A673 (cell line): ENCODE measurements at regions of chr18 and their contacts with region 1.

Region 1: GRCh38 chr18:59865241-59865986 is 34.4 kb upstream of the PMAIP1 start:
- DNase-seq: no peak
- H3K4me3 ChIP-seq: no peak overlapping the region
- H3K27ac ChIP-seq: no peak overlapping the region
- H3K4me1 ChIP-seq: no peaks in the 10 kb centered on the region
- H3K27me3 ChIP-seq: no peaks in the 10 kb centered on the region
- CTCF ChIP-seq: no peak

Region 2: GRCh38 chr18:59877361-59877760 is 11.9 kb after region 1 on chr18:
- CTCF ChIA-PET with region 1: interaction called, 11 read pairs
- POLR2A ChIA-PET with region 1: no interaction called
- intact Hi-C with region 1: no loop called
- DNase-seq: no peak
- H3K4me3 ChIP-seq: no peak overlapping the region
- H3K27ac ChIP-seq: no peak overlapping the region
- H3K4me1 ChIP-seq: peaks cover 2% of the 10 kb centered on the region
- H3K27me3 ChIP-seq: no peaks in the 10 kb centered on the region
- CTCF ChIP-seq: no peak